Mammary epithelial cell (primary cell): ENCODE measurements at regions of chr5 and their contacts with region 1.

Region 1: GRCh38 chr5:33440482-33441240 is at the start of gene TARS1:
- DNase-seq: peak; percentile 100
- H3K4me3 ChIP-seq: peak within 1 kb of the TSS; percentile 70 to 83 (median 82)
- H3K27ac ChIP-seq: peak within 1 kb of the TSS; percentile 93
- H3K4me1 ChIP-seq: peaks cover 12% of the 10 kb centered on the region
- H3K27me3 ChIP-seq: no peaks in the 10 kb centered on the region
- CTCF ChIP-seq: no peak
- total RNA-seq, gene TARS1: 332 to 379 TPM

Region 2: DNA sequence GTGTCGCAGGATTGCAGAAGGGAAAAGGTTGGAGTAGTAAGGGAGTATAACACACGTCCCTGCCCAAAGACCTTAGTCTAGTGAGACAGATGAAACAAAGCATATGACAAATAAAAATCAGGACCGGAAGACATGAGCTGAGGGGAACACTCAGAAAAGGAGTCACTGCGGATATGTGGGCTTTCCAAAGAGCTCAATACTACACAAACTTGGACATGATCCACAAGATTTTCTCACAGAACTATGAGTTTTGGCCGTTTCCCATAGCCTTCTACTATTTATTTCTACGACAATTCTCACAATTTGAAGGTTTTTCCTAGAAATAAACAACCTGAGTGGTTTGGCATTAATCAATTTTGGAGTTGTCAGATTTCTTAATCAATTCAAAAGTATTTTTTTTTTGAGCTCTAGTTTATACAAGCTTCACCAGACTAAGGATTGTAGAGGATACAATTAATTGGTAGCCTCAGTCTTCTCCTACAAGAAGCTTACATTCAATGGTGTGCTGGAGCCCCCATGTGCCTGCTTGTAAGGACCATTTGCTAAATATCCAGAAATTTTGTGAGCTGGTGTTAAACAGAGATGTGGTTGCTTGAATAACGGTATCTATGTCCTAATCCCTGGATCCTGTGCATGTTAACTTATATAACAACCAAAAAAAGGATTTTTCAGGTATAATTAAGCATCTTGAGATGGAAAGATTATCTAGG is 359.7 kb after region 1 on chr5:
- CTCF ChIA-PET with region 1: no interaction called
- dilution Hi-C with region 1: no loop called
- in situ Hi-C with region 1: no loop called
- intact Hi-C with region 1: loop called (anchors 2 kb)
- DNase-seq: no peak
- H3K4me3 ChIP-seq: no peak overlapping the region
- H3K27ac ChIP-seq: no peak overlapping the region
- H3K4me1 ChIP-seq: peaks cover 4% of the 10 kb centered on the region
- H3K27me3 ChIP-seq: no peaks in the 10 kb centered on the region
- CTCF ChIP-seq: no peak

Region 3: DNA sequence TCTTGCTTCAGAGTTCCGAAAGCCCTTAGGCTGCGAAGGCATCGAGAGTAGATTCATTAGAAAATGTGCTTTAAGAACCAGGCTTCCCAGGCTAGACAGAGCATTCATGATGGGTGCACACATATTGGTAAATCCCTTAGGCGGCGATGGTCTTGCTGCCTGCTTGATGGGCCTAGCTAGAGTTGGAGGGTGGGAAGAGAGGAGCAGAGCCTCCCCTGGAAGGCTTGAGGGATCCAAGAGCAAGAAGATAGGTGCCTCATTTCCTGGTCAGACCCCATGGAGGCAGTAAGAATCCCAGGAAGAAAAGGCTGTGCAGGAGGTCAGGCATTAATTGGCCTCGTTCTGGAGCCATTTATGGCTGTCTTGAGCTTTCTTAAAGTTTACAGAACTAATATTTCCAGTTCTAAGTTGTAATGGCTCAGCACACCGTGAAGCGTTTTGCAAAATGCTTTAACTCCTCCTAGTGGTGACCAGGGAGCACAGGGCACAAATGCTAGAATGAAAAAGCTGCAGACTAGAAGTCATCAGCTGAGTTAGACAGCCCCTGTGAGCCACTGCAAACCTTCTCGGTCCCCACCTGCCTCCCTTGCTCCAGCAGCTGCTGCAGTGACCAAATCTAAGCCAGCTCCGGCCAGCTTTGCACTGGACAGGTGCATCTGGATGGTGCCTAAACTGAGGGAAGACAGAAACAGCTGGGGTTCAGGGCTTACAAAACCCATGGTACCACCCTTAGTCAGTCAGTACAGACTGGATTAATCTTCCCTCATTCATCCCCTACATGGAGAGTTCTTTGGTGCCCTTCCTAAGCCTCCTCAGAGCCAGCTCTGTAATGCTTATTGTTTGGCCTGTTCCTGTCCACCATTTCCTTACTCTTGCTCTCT is 529.2 kb after region 1 on chr5:
- CTCF ChIA-PET with region 1: interaction called, 16 read pairs
- dilution Hi-C with region 1: no loop called
- in situ Hi-C with region 1: no loop called
- intact Hi-C with region 1: loop called (anchors 1 kb)
- DNase-seq: peak; percentile 40
- H3K4me3 ChIP-seq: no peak overlapping the region
- H3K27ac ChIP-seq: no peak overlapping the region
- H3K4me1 ChIP-seq: no peaks in the 10 kb centered on the region
- H3K27me3 ChIP-seq: no peaks in the 10 kb centered on the region
- CTCF ChIP-seq: peak; percentile 67 to 77

Region 4: DNA sequence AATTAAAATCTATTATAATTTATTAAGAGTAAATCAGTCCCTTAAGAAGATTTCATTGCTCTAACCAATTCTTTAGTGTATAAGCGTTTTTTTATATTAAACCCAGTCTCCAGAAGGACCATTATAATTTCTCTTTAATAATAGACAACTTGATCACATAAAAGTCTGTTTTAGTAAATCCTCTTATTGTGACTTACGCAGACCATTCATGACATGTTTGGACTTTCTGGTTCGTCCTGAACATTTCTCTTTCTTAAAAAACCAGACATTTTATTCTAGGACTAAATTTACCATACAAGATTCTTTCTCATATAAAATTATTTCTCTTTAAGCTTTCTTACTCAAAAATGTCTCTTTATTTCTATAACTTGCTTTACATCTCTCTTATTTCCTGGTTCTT is 1019.2 kb after region 1 on chr5:
- CTCF ChIA-PET with region 1: no interaction called
- dilution Hi-C with region 1: no loop called
- in situ Hi-C with region 1: loop called in 1 of 2 experiments (anchors 25 kb)
- intact Hi-C with region 1: loop called (anchors 5 kb)
- DNase-seq: no peak
- H3K4me3 ChIP-seq: no peak overlapping the region
- H3K27ac ChIP-seq: no peak overlapping the region
- H3K4me1 ChIP-seq: no peaks in the 10 kb centered on the region
- H3K27me3 ChIP-seq: no peaks in the 10 kb centered on the region
- CTCF ChIP-seq: no peak

Region 5: DNA sequence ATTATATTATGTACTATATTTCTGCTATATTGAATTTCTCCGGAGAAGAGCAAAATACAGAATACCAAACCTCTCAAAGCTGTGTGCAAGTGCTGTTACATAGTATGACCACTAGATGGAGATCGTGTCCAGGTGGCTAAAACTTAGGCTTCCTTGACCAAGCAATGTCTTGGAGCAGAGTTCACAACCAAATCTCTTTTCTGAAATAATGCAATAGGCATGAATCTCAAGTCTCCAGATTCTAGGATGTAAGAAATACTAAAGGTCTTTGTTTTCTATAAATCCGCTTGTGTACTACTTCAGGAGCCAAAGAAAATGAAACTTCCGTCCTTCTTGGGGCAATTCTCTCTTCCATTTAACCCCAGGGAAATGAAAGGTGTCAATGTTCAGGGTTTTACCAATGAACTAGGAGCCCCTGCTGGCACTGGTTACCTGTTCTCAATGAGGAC is 1033.9 kb after region 1 on chr5:
- CTCF ChIA-PET with region 1: no interaction called
- dilution Hi-C with region 1: no loop called
- in situ Hi-C with region 1: loop called in 1 of 2 experiments (anchors 25 kb)
- intact Hi-C with region 1: loop called (anchors 5 kb)
- DNase-seq: peak; percentile 43
- H3K4me3 ChIP-seq: no peak overlapping the region
- H3K27ac ChIP-seq: no peak overlapping the region
- H3K4me1 ChIP-seq: no peaks in the 10 kb centered on the region
- H3K27me3 ChIP-seq: no peaks in the 10 kb centered on the region
- CTCF ChIP-seq: peak; percentile 96 to 98